Activated naive CD4-positive, alpha-beta T cell treated with anti-CD3 and anti-CD28 coated beads for 36 hours (primary cell): ENCODE measurements at regions of chr2 and their contacts with region 1.

Region 1: GRCh38 chr2:60581433-60582282 is 28.2 kb upstream of the BCL11A start:
- DNase-seq: peak; percentile 72
- H3K4me3 Mint-ChIP-seq: no peak overlapping the region
- H3K27ac Mint-ChIP-seq: no peak overlapping the region
- H3K4me1 Mint-ChIP-seq: peaks cover 2% of the 10 kb centered on the region
- H3K27me3 Mint-ChIP-seq: peaks cover 28% of the 10 kb centered on the region

Region 2: GRCh38 chr2:59301466-59302402 is 1279.9 kb before region 1 on chr2:
- CTCF ChIA-PET with region 1: no interaction called
- intact Hi-C with region 1: loop called (anchors 2 kb)
- DNase-seq: peak; percentile 29
- H3K4me3 Mint-ChIP-seq: no peak overlapping the region
- H3K27ac Mint-ChIP-seq: no peak overlapping the region
- H3K4me1 Mint-ChIP-seq: no peaks in the 10 kb centered on the region
- H3K27me3 Mint-ChIP-seq: peaks cover 4% of the 10 kb centered on the region

Region 3: GRCh38 chr2:60306267-60306861 is 275.3 kb before region 1 on chr2:
- CTCF ChIA-PET with region 1: no interaction called
- intact Hi-C with region 1: no loop called
- DNase-seq: no peak
- H3K4me3 Mint-ChIP-seq: no peak overlapping the region
- H3K27ac Mint-ChIP-seq: no peak overlapping the region
- H3K4me1 Mint-ChIP-seq: no peaks in the 10 kb centered on the region
- H3K27me3 Mint-ChIP-seq: no peaks in the 10 kb centered on the region

Region 4: GRCh38 chr2:60498816-60499429 is 82.7 kb before region 1 on chr2:
- CTCF ChIA-PET with region 1: interaction called, 5 read pairs
- intact Hi-C with region 1: loop called (anchors 5 kb)
- DNase-seq: no peak
- H3K4me3 Mint-ChIP-seq: no peak overlapping the region
- H3K27ac Mint-ChIP-seq: no peak overlapping the region
- H3K4me1 Mint-ChIP-seq: no peaks in the 10 kb centered on the region
- H3K27me3 Mint-ChIP-seq: no peaks in the 10 kb centered on the region

Region 5: GRCh38 chr2:60560734-60561644 is 20.7 kb before region 1 on chr2:
- CTCF ChIA-PET with region 1: interaction called, 61 read pairs
- intact Hi-C with region 1: loop called (anchors 1 kb)
- DNase-seq: peak; percentile 20
- H3K4me3 Mint-ChIP-seq: no peak overlapping the region
- H3K27ac Mint-ChIP-seq: no peak overlapping the region
- H3K4me1 Mint-ChIP-seq: peaks cover 13% of the 10 kb centered on the region
- H3K27me3 Mint-ChIP-seq: peaks cover 60% of the 10 kb centered on the region